ENCODE measurements at regions of chr2 and their contacts with region 1.

Region 1: DNA sequence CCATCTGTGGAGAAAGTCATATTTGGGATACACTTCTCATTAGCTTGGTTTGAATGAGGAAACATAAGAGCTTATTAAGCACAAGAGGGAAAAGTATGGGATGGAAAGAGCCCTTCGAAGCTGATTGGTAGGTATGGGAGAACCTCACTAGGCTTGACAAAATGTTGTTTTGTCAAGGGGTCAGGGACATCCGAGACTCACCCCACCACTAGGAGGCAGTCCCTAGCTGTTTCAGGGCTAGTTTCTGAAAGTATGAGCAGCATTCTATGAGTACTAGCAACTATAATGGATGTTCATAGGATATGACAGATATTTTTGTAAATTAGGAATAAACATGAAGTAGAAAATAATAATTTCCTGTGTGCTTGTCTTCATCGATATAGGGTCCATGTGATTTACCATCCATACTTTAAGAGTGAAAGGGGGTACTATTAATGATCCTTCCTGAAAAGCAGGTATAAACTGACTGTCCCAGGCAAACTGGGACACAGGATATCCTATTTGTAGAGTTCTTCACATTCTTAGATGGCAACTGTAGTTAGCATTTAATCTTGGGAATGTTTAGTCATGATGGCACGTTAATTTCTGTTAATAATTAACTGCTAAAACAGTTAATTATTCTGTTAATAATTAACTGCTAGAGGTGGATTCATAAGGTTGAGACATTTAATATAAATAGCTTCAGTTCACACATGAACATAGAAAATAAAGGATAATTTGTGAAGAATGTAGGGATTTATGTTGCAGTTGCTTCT is 28.4 kb downstream of the OTX1 start:
- DNase-seq: peak; percentile 47 to 63
- H3K4me3 ChIP-seq: no peak overlapping the region
- H3K4me3 Mint-ChIP-seq: no peak overlapping the region
- H3K27ac Mint-ChIP-seq: no peak overlapping the region
- H3K4me1 ChIP-seq: peaks cover 26% of the 10 kb centered on the region
- H3K4me1 Mint-ChIP-seq: peaks cover 12% of the 10 kb centered on the region
- H3K27me3 ChIP-seq: no peaks in the 10 kb centered on the region
- H3K27me3 Mint-ChIP-seq: no peaks in the 10 kb centered on the region
- CTCF ChIP-seq: peak; percentile 47

Region 2: DNA sequence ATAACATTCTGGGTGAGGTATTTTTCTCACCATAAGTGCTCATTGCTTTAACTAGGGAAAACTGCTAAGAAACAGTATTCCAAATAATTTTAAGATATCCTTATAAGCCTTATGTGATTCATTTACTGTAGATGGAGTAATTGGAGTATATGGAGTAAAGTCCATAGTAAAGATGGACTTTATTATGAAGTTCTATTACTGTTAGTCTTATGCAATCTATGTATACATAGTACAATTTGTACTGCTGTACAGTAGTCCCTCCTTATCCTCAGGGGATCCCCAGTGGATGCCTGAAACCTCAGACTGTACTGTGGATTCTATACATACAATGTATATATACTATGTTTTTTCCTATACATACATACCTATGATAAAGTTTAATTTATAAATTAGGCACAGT is 69.5 kb before region 1 on chr2:
- CTCF ChIA-PET with region 1: no interaction called
- POLR2A ChIA-PET with region 1: no interaction called
- intact Hi-C with region 1: no loop called
- DNase-seq: no peak
- H3K4me3 ChIP-seq: no peak overlapping the region
- H3K4me3 Mint-ChIP-seq: no peak overlapping the region
- H3K27ac Mint-ChIP-seq: no peak overlapping the region
- H3K4me1 ChIP-seq: no peaks in the 10 kb centered on the region
- H3K4me1 Mint-ChIP-seq: no peaks in the 10 kb centered on the region
- H3K27me3 ChIP-seq: no peaks in the 10 kb centered on the region
- H3K27me3 Mint-ChIP-seq: no peaks in the 10 kb centered on the region
- CTCF ChIP-seq: no peak

Region 3: DNA sequence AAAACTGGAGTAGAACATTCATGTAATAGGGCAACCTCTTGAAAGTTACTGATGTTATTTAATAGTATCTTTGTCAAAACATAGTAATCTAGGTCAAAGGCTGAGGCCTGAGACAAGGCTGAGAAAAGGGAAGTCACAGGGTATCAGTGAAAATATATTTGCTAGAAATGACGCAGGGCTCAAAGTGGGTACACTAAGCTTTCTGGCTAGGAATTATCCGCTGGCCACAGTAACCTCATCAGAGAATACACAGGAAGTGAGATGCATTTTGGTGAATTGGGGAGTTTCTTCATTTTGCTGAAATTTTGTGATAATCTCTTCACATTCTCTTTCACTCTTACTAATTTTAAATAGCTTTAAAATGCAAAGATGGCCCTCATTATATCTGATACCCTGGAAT is 178.4 kb after region 1 on chr2:
- CTCF ChIA-PET with region 1: no interaction called
- POLR2A ChIA-PET with region 1: no interaction called
- intact Hi-C with region 1: no loop called
- DNase-seq: no peak
- H3K4me3 ChIP-seq: no peak overlapping the region
- H3K4me3 Mint-ChIP-seq: no peak overlapping the region
- H3K27ac Mint-ChIP-seq: no peak overlapping the region
- H3K4me1 ChIP-seq: no peaks in the 10 kb centered on the region
- H3K4me1 Mint-ChIP-seq: no peaks in the 10 kb centered on the region
- H3K27me3 ChIP-seq: no peaks in the 10 kb centered on the region
- H3K27me3 Mint-ChIP-seq: no peaks in the 10 kb centered on the region
- CTCF ChIP-seq: no peak

Region 4: GRCh38 chr2:63488118-63488713 is 409.2 kb after region 1 on chr2:
- CTCF ChIA-PET with region 1: no interaction called
- POLR2A ChIA-PET with region 1: no interaction called
- intact Hi-C with region 1: loop called (anchors 2 kb)
- DNase-seq: peak in 1 of 2 experiments; percentile 41
- H3K4me3 ChIP-seq: no peak overlapping the region
- H3K4me3 Mint-ChIP-seq: no peak overlapping the region
- H3K27ac Mint-ChIP-seq: no peak overlapping the region
- H3K4me1 ChIP-seq: no peaks in the 10 kb centered on the region
- H3K4me1 Mint-ChIP-seq: no peaks in the 10 kb centered on the region
- H3K27me3 ChIP-seq: no peaks in the 10 kb centered on the region
- H3K27me3 Mint-ChIP-seq: no peaks in the 10 kb centered on the region
- CTCF ChIP-seq: peak; percentile 78 to 80

Region 5: GRCh38 chr2:63537306-63537705 is 458.3 kb after region 1 on chr2:
- CTCF ChIA-PET with region 1: no interaction called
- POLR2A ChIA-PET with region 1: no interaction called
- intact Hi-C with region 1: no loop called
- DNase-seq: no peak
- H3K4me3 ChIP-seq: no peak overlapping the region
- H3K4me3 Mint-ChIP-seq: no peak overlapping the region
- H3K27ac Mint-ChIP-seq: no peak overlapping the region
- H3K4me1 ChIP-seq: no peaks in the 10 kb centered on the region
- H3K4me1 Mint-ChIP-seq: no peaks in the 10 kb centered on the region
- H3K27me3 ChIP-seq: no peaks in the 10 kb centered on the region
- H3K27me3 Mint-ChIP-seq: peaks cover 3% of the 10 kb centered on the region
- CTCF ChIP-seq: no peak